ENCODE measurements at regions of chr6 and their contacts with region 1.

Region 1: DNA sequence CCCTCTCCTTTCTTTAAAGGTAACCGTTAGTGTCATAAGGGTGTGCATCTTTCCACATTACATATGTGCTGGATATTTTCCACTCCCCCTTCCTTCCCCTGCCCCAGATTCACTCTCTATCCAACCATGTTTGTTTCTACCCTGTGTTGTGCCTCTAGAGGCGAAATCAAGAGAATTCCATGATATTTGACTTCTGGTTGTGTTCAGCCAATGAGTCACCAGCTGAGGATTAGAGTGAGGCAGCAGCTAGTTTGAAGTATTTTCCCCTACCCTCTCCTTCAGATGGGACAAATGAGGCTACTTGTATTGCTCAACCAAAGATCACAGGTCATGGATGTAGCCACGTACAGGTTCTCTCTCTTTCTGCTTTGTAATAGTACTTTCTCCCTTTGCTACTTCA is 24.6 kb upstream of the OR2J2 start:
- DNase-seq: no peak
- H3K4me3 ChIP-seq: no peak overlapping the region
- H3K27ac ChIP-seq: no peak overlapping the region
- H3K4me1 ChIP-seq: no peaks in the 10 kb centered on the region
- H3K27me3 ChIP-seq: no peaks in the 10 kb centered on the region
- CTCF ChIP-seq: no peak

Region 2: GRCh38 chr6:29183594-29183993 is 37.4 kb after region 1 on chr6:
- CTCF ChIA-PET with region 1: no interaction called
- dilution Hi-C with region 1: no loop called
- in situ Hi-C with region 1: no loop called
- intact Hi-C with region 1: no loop called
- DNase-seq: no peak
- H3K4me3 ChIP-seq: no peak overlapping the region
- H3K27ac ChIP-seq: no peak overlapping the region
- H3K4me1 ChIP-seq: no peaks in the 10 kb centered on the region
- H3K27me3 ChIP-seq: no peaks in the 10 kb centered on the region
- CTCF ChIP-seq: no peak

Region 3: GRCh38 chr6:29211488-29211887 is 65.3 kb after region 1 on chr6:
- CTCF ChIA-PET with region 1: no interaction called
- dilution Hi-C with region 1: loop called (anchors 5 kb)
- in situ Hi-C with region 1: no loop called
- intact Hi-C with region 1: no loop called
- DNase-seq: no peak
- H3K4me3 ChIP-seq: no peak overlapping the region
- H3K27ac ChIP-seq: no peak overlapping the region
- H3K4me1 ChIP-seq: no peaks in the 10 kb centered on the region
- H3K27me3 ChIP-seq: no peaks in the 10 kb centered on the region
- CTCF ChIP-seq: no peak